Panc1 (cell line): ENCODE measurements at regions of chr5 and their contacts with region 1.

Region 1: DNA sequence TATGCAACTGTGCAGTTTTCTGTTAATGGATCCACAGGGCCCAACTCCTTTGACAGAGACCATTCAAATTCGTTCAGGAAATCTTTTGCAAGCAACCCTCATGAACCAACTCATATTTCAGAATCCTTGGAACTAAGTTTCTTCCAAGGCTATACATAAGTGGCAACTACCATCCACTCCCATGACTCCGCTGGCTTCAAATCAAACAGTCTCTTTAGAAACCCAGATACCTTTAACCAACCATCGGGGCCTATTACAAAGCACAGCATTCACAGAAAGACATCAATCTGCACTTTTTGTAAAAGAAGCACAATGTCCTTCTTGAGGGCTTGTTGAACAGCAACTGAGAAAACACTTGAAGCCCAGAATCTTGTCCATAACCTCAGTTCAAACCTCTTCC is 526.9 kb downstream of the DTWD2 start:
- DNase-seq: no peak
- ATAC-seq: no peak
- H3K4me3 ChIP-seq: no peak overlapping the region
- H3K27ac ChIP-seq: no peak overlapping the region
- H3K4me1 ChIP-seq: no peaks in the 10 kb centered on the region
- H3K27me3 ChIP-seq: no peaks in the 10 kb centered on the region
- CTCF ChIP-seq: no peak

Region 2: GRCh38 chr5:118249386-118249785 is 212.1 kb before region 1 on chr5:
- CTCF ChIA-PET with region 1: no interaction called
- POLR2A ChIA-PET with region 1: no interaction called
- in situ Hi-C with region 1: no loop called
- intact Hi-C with region 1: no loop called
- DNase-seq: no peak
- ATAC-seq: no peak
- H3K4me3 ChIP-seq: no peak overlapping the region
- H3K27ac ChIP-seq: no peak overlapping the region
- H3K4me1 ChIP-seq: no peaks in the 10 kb centered on the region
- H3K27me3 ChIP-seq: no peaks in the 10 kb centered on the region
- CTCF ChIP-seq: no peak

Region 3: GRCh38 chr5:118675247-118675646 is 213.8 kb after region 1 on chr5:
- CTCF ChIA-PET with region 1: no interaction called
- POLR2A ChIA-PET with region 1: no interaction called
- in situ Hi-C with region 1: no loop called
- intact Hi-C with region 1: no loop called
- DNase-seq: no peak
- ATAC-seq: no peak
- H3K4me3 ChIP-seq: no peak overlapping the region
- H3K27ac ChIP-seq: no peak overlapping the region
- H3K4me1 ChIP-seq: no peaks in the 10 kb centered on the region
- H3K27me3 ChIP-seq: no peaks in the 10 kb centered on the region
- CTCF ChIP-seq: no peak

Region 4: GRCh38 chr5:118937393-118938061 is 476.1 kb after region 1 on chr5:
- CTCF ChIA-PET with region 1: no interaction called
- POLR2A ChIA-PET with region 1: no interaction called
- in situ Hi-C with region 1: no loop called
- intact Hi-C with region 1: loop called (anchors 5 kb)
- DNase-seq: no peak
- ATAC-seq: no peak
- H3K4me3 ChIP-seq: no peak overlapping the region
- H3K27ac ChIP-seq: no peak overlapping the region
- H3K4me1 ChIP-seq: no peaks in the 10 kb centered on the region
- H3K27me3 ChIP-seq: no peaks in the 10 kb centered on the region
- CTCF ChIP-seq: no peak